PC-3 (cell line): ENCODE measurements at regions of chr6 and their contacts with region 1.

Region 1: GRCh38 chr6:44074439-44075136 is 52.7 kb downstream of the MRPL14 start:
- DNase-seq: peak; percentile 86
- ATAC-seq: peak; percentile 47
- H3K4me3 ChIP-seq: no peak overlapping the region
- H3K27ac ChIP-seq: peak overlapping the region; percentile 58
- H3K4me1 ChIP-seq: peaks cover 43% of the 10 kb centered on the region
- H3K27me3 ChIP-seq: no peaks in the 10 kb centered on the region
- CTCF ChIP-seq: peak; percentile 97

Region 2: DNA sequence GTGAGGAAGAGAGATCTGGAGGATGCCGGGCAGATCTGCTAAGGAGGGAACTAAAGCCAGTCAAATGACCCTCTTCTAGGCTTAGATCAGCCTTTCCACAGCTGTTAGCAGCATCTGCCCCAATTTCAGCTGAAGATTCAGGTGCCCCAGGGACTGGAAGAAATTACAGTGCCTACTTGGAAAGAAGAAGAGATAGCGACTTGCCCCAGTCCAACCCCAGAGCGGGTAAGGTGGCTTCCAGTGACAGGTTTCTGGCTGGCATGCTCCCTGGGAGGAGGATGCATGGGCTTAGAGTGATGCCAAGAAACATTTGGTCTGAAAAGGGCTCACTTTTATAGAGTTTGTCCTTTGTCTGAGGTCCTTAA is 596.6 kb before region 1 on chr6:
- CTCF ChIA-PET with region 1: no interaction called
- POLR2A ChIA-PET with region 1: no interaction called
- intact Hi-C with region 1: no loop called
- DNase-seq: no peak
- ATAC-seq: no peak
- H3K4me3 ChIP-seq: peak overlapping the region; percentile 90
- H3K27ac ChIP-seq: 0 out of 2 replicates have a peak overlapping the region, but pooled peaks have one; percentile 15
- H3K4me1 ChIP-seq: peaks cover 44% of the 10 kb centered on the region
- H3K27me3 ChIP-seq: no peaks in the 10 kb centered on the region
- CTCF ChIP-seq: no peak

Region 3: GRCh38 chr6:43667245-43668150 is 407.1 kb before region 1 on chr6:
- CTCF ChIA-PET with region 1: interaction called, 5 read pairs
- POLR2A ChIA-PET with region 1: no interaction called
- intact Hi-C with region 1: loop called (anchors 1 kb)
- DNase-seq: peak; percentile 93
- ATAC-seq: peak; percentile 57
- H3K4me3 ChIP-seq: no peak overlapping the region; the same call in 1 of the 2 replicates
- H3K27ac ChIP-seq: no peak overlapping the region
- H3K4me1 ChIP-seq: peaks cover 46% of the 10 kb centered on the region
- H3K27me3 ChIP-seq: no peaks in the 10 kb centered on the region
- CTCF ChIP-seq: peak; percentile 92

Region 4: DNA sequence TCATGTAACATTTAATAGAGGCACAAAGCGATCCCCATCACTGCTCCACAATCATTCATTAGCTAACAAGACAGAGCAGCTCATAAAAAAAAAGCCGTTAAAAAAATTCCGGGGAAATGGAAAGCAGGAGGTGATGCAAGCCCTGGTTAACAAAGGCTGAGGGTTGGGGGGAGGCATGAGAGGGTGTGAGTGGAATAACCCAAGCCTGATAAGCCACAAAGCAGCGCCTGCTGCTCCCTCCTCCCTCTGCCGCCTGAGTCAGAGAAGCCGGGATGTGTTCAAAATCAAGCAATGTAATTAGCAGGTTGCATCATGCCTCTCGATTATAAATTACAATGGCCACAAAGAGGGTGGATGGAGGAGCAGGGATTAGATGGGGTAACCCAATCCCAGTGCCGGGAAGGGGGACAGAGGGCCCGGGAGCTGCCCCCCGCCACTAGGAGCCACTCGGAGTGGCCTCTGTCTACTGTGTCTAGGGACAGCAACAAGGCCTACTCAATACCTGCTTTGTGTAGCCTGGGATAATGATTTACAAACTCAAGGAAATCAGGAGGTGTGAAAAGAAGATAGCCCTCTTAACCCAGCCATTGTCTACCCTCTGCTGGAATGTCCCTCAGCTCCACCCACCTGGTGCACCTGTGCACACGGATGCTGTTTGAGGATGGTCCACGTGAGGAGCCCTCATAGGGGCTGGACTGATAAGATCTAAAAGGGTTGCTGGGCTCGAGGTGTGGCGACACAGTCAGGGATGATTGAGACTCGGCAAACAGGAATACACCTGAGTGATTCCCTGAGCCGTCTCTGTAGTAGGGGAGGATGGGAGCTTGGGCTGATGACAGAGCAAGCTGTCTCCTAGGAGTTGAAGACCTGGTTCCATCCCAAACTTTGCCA is 147.7 kb before region 1 on chr6:
- CTCF ChIA-PET with region 1: interaction called, 4 read pairs
- POLR2A ChIA-PET with region 1: no interaction called
- intact Hi-C with region 1: loop called (anchors 2 kb)
- DNase-seq: peak; percentile 53
- ATAC-seq: peak; percentile 42; the same call in 1 of the 2 replicates
- H3K4me3 ChIP-seq: no peak overlapping the region
- H3K27ac ChIP-seq: peak overlapping the region; percentile 14; the same call in 1 of the 2 replicates
- H3K4me1 ChIP-seq: peaks cover 32% of the 10 kb centered on the region
- H3K27me3 ChIP-seq: no peaks in the 10 kb centered on the region
- CTCF ChIP-seq: no peak; the same call in 1 of the 2 replicates

Region 5: DNA sequence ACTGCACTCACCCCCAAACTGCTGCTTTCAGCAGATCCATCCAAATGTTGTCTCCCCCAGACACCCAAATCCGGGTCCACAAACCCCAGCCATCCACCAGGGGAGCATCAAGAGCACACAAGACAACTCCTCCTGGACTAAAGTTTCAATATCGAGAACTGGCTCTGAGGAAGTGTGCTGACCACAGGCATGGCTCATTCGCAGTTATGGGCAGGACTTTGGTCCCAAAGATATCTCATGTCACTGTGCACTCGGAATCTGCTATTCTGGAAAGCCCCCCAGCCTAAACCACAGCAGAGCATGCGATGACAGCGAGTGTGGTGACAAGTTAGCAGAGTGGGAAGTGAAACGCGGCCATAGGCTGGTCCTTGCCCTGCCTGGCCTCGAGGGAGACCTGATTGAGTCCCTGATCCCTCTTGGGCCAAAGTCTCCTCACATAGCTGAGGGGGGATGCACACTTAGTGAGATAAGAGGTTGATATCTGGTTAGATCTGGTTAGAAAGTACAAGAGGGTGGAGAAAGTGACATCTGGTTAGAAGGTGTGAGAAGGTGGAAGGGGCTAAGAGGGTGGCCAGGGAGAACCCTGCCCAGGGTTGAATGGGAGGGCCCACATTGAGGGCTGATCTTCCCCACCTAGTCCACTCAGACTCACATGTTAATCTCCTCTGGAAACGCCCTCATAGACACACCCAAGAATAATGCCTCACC is 97.0 kb before region 1 on chr6:
- CTCF ChIA-PET with region 1: interaction called, 4 read pairs
- POLR2A ChIA-PET with region 1: no interaction called
- intact Hi-C with region 1: loop called (anchors 2 kb)
- DNase-seq: no peak
- ATAC-seq: no peak
- H3K4me3 ChIP-seq: no peak overlapping the region
- H3K27ac ChIP-seq: no peak overlapping the region
- H3K4me1 ChIP-seq: peaks cover 50% of the 10 kb centered on the region
- H3K27me3 ChIP-seq: no peaks in the 10 kb centered on the region
- CTCF ChIP-seq: no peak

Region 6: DNA sequence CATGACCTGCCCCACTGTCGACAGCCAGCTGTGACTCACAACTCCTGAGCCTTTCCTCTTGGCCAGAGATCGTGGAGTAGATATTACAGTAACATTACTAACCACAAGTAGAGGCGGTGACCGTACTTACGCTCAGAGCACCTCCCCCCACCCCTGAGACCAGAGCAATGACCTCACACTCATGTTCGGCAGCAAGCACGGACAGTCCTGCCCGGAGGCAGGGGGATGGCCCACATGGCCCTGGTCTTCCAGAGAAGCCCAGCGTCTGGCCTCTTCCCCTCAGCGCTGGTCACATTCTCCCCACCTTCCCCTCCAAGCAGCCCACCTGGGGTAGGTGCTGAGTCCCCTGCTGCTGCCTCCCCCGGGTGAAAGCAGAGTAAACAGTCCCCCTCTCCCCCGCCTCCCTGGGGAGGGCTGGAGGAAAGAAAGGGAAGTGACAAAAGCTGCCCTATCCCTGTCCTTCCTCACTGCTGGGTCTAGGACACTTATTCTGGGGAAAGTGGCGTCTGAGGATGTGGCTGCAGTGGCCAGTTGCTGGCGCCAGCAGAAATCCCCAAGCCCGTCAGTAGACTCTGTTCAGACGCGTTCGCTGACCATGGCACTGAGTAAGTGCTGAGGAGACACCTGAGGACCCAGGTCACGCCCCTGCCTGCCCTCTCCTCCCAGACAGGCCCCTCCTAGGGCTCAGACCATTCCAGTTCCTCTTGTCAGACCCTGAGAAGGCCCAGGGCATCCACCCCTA is 15.8 kb before region 1 on chr6:
- CTCF ChIA-PET with region 1: interaction called, 4 read pairs
- POLR2A ChIA-PET with region 1: no interaction called
- intact Hi-C with region 1: loop called (anchors 2 kb)
- DNase-seq: peak; percentile 98
- ATAC-seq: peak; percentile 87
- H3K4me3 ChIP-seq: no peak overlapping the region
- H3K27ac ChIP-seq: peak overlapping the region; percentile 97
- H3K4me1 ChIP-seq: peaks cover 57% of the 10 kb centered on the region
- H3K27me3 ChIP-seq: no peaks in the 10 kb centered on the region
- CTCF ChIP-seq: no peak

Region 7: GRCh38 chr6:44172731-44173500 is 98.3 kb after region 1 on chr6:
- CTCF ChIA-PET with region 1: no interaction called
- POLR2A ChIA-PET with region 1: no interaction called
- intact Hi-C with region 1: no loop called
- DNase-seq: peak; percentile 89
- ATAC-seq: peak; percentile 99
- H3K4me3 ChIP-seq: no peak overlapping the region
- H3K27ac ChIP-seq: no peak overlapping the region
- H3K4me1 ChIP-seq: no peaks in the 10 kb centered on the region
- H3K27me3 ChIP-seq: no peaks in the 10 kb centered on the region
- CTCF ChIP-seq: peak; percentile 97

Region 8: GRCh38 chr6:44367681-44368080 is 293.1 kb after region 1 on chr6:
- CTCF ChIA-PET with region 1: no interaction called
- POLR2A ChIA-PET with region 1: no interaction called
- intact Hi-C with region 1: no loop called
- DNase-seq: no peak
- ATAC-seq: no peak
- H3K4me3 ChIP-seq: no peak overlapping the region
- H3K27ac ChIP-seq: no peak overlapping the region
- H3K4me1 ChIP-seq: no peaks in the 10 kb centered on the region
- H3K27me3 ChIP-seq: no peaks in the 10 kb centered on the region
- CTCF ChIP-seq: no peak

Region 9: GRCh38 chr6:44667668-44668390 is 593.2 kb after region 1 on chr6:
- CTCF ChIA-PET with region 1: no interaction called
- POLR2A ChIA-PET with region 1: no interaction called
- intact Hi-C with region 1: no loop called
- DNase-seq: peak; percentile 34
- ATAC-seq: no peak
- H3K4me3 ChIP-seq: no peak overlapping the region
- H3K27ac ChIP-seq: no peak overlapping the region
- H3K4me1 ChIP-seq: peaks cover 9% of the 10 kb centered on the region
- H3K27me3 ChIP-seq: no peaks in the 10 kb centered on the region
- CTCF ChIP-seq: peak; percentile 48; the same call in 1 of the 2 replicates